ENCODE measurements at regions of chr10 and their contacts with region 1.

Region 1: GRCh38 chr10:75048669-75049098 is 62.8 kb upstream of the SAMD8 start:
- DNase-seq: peak in 1 of 2 donors; percentile 22
- ATAC-seq: no peak
- H3K4me3 ChIP-seq: no peak overlapping the region
- H3K27ac ChIP-seq: no peak overlapping the region
- H3K4me1 ChIP-seq: no peaks in the 10 kb centered on the region
- H3K27me3 ChIP-seq: no peaks in the 10 kb centered on the region

Region 2: GRCh38 chr10:74991440-74992130 is 57.1 kb before region 1 on chr10:
- intact Hi-C with region 1: no loop called
- DNase-seq: no peak
- ATAC-seq: no peak
- H3K4me3 ChIP-seq: no peak overlapping the region
- H3K27ac ChIP-seq: no peak overlapping the region
- H3K4me1 ChIP-seq: peaks cover 0 to 9% of the 10 kb centered on the region in 2 donors
- H3K27me3 ChIP-seq: no peaks in the 10 kb centered on the region

Region 3: GRCh38 chr10:75145590-75145989 is 96.9 kb after region 1 on chr10:
- intact Hi-C with region 1: loop called in 1 of 2 experiments (anchors 5 kb)
- DNase-seq: no peak
- ATAC-seq: no peak
- H3K4me3 ChIP-seq: no peak overlapping the region
- H3K27ac ChIP-seq: no peak overlapping the region
- H3K4me1 ChIP-seq: peaks cover 0 to 1% of the 10 kb centered on the region in 2 donors
- H3K27me3 ChIP-seq: no peaks in the 10 kb centered on the region

Measured in aorta (tissue), 5 donors.